Right ventricle myocardium superior (tissue), 1 donor: ENCODE measurements at regions of chr7 and their contacts with region 1.

Region 1: DNA sequence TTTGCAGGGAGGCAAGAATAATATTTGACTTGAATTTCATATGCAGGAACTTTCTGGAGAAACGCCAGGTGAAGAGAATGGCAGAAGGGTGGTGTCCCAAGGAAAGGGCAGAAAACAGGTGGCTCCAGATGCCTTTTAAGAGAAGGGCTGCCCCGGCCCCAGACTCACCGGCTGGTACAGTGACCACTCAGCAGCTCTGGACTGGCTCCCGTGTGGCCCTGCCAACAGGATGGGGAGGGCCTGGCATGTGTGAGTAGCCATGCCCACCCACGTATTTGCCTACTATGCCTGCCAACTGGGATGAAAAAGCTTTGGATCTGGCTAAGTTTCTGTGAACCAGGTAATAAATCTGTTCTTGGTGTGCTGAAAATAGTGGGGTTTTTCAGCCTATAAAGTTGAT is 159.5 kb downstream of the PRKAG2 start:
- DNase-seq: no peak
- ATAC-seq: peak; percentile 26

Region 2: GRCh38 chr7:151694828-151695580 is 22.4 kb before region 1 on chr7:
- intact Hi-C with region 1: loop called (anchors 2 kb)
- DNase-seq: peak; percentile 81
- ATAC-seq: peak; percentile 86